ENCODE measurements at regions of chr6 and their contacts with region 1.

Region 1: DNA sequence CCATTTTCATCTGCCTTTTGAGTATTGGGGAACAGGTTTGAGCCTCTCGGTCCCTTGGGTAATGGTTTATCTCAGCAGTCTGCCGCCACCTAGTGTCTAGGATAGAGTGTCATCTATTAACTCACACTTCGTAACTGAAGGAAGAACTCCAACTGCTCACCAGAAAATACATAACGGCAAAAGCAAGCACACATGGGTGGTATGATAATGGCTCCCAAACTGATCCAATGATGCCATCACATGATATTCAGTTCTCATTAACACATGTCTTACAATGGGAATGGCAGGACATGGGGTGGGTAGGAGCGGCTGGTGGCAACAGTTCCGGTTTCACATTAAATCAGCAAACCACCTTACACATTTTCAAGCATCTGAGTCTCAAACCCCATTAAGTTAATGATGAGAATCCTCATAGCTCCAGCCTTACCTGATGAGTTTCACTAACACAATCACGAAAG is 110.7 kb upstream of the PHACTR1 start:
- DNase-seq: peak; percentile 81
- H3K4me3 ChIP-seq: no peak overlapping the region
- H3K27ac ChIP-seq: no peak overlapping the region
- H3K4me1 ChIP-seq: peaks cover 42% of the 10 kb centered on the region
- H3K27me3 ChIP-seq: no peaks in the 10 kb centered on the region
- CTCF ChIP-seq: peak; percentile 58 to 61
- POLR2A ChIP-seq: no peak

Region 2: DNA sequence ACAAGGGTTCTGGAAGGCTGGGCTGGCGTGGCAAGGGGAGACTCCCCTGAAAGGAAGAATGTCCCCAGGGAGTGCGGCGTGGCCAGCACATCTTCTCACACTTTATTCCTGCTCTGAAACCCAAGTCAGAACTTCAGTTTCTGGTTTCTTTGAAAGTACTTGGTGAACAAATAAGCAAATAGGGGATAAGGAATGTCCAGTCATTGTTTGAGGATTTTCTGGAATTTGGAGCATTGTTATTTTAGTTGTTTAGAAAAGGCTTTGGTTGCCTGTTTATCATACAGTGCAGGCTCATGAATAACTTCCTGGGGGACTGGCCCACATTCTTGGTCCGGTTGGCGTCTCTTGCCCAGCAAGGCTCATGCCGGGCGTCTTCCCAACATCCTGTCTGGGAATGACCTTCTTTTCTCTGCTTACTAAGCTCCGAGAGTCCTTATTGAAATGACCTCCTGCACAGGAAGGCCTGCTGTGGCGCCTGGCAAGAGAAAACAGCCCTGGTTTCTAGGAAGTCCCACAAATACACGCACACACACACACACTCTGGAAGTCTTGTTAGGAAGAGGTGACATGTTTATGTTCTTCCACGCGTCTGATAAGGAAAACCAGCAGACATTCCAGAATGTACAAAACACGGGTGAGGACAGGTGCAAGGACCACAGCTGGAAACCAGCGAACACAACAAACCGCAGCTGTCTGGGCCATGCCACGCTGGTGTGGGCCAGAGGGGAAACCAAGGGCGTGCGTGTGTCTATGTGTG is 996.4 kb before region 1 on chr6:
- CTCF ChIA-PET with region 1: no interaction called
- POLR2A ChIA-PET with region 1: no interaction called
- dilution Hi-C with region 1: no loop called
- intact Hi-C with region 1: loop called (anchors 2 kb)
- DNase-seq: peak; percentile 99
- H3K4me3 ChIP-seq: peak overlapping the region in 2 of 3 experiments; percentile 30 to 86
- H3K27ac ChIP-seq: peak overlapping the region; percentile 99
- H3K4me1 ChIP-seq: peaks cover 78% of the 10 kb centered on the region
- H3K27me3 ChIP-seq: no peaks in the 10 kb centered on the region
- CTCF ChIP-seq: no peak
- POLR2A ChIP-seq: no peak

Region 3: GRCh38 chr6:12060780-12061619 is 544.9 kb before region 1 on chr6:
- CTCF ChIA-PET with region 1: no interaction called
- POLR2A ChIA-PET with region 1: no interaction called
- dilution Hi-C with region 1: no loop called
- intact Hi-C with region 1: loop called (anchors 10 kb)
- DNase-seq: no peak
- H3K4me3 ChIP-seq: no peak overlapping the region
- H3K27ac ChIP-seq: no peak overlapping the region
- H3K4me1 ChIP-seq: peaks cover 4% of the 10 kb centered on the region
- H3K27me3 ChIP-seq: no peaks in the 10 kb centered on the region
- CTCF ChIP-seq: no peak
- POLR2A ChIP-seq: no peak

Region 4: DNA sequence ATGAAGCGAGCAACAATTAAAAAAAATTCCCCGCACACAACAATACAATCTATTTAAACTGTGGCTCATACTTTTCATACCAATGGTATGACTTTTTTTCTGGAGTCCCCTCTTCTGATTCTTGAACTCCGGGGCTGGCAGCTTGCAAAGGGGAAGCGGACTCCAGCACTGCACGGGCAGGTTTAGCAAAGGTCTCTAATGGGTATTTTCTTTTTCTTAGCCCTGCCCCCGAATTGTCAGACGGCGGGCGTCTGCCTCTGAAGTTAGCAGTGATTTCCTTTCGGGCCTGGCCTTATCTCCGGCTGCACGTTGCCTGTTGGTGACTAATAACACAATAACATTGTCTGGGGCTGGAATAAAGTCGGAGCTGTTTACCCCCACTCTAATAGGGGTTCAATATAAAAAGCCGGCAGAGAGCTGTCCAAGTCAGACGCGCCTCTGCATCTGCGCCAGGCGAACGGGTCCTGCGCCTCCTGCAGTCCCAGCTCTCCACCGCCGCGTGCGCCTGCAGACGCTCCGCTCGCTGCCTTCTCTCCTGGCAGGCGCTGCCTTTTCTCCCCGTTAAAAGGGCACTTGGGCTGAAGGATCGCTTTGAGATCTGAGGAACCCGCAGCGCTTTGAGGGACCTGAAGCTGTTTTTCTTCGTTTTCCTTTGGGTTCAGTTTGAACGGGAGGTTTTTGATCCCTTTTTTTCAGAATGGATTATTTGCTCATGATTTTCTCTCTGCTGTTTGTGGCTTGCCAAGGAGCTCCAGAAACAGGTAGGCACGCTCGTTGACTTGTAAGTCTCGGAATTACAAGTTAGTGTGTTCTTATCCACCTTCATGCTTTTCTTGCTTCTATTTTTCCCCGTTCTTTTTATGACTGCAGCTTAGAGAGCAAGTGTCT is 315.7 kb before region 1 on chr6 and contains the start of gene EDN1:
- CTCF ChIA-PET with region 1: interaction called, 30 read pairs
- POLR2A ChIA-PET with region 1: interaction called, 18 read pairs
- dilution Hi-C with region 1: no loop called
- intact Hi-C with region 1: no loop called
- DNase-seq: peak; percentile 100
- H3K4me3 ChIP-seq: peak within 1 kb of the TSS; percentile 91 to 98 (median 96)
- H3K27ac ChIP-seq: peak within 1 kb of the TSS; percentile 98
- H3K4me1 ChIP-seq: peaks cover 26% of the 10 kb centered on the region
- H3K27me3 ChIP-seq: no peaks in the 10 kb centered on the region
- CTCF ChIP-seq: no peak
- POLR2A ChIP-seq: peak; percentile 100
- total RNA-seq, gene EDN1: 493 and 514 TPM in 2 replicates

Region 5: DNA sequence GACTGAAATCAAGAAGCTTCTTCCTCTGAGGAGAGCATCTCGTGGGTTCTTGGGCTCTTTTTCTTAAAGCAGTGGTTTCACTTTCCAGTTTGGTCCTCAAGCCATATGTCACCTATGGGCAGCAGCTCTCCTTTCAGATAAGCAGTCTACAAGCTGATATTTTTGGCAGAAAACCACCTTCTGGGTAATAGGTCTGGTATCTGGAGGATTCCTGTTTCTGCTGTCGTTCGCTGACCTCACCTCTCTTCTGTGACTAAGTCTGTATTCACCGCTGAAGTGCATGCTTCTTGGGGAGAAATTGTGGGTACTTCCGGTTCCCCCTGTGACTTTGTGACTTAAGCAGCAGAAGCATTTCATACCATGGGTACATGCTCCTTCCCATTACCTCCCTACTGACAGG is 122.2 kb before region 1 on chr6:
- CTCF ChIA-PET with region 1: interaction called, 58 read pairs
- POLR2A ChIA-PET with region 1: no interaction called
- dilution Hi-C with region 1: no loop called
- intact Hi-C with region 1: loop called (anchors 2 kb)
- DNase-seq: peak; percentile 90
- H3K4me3 ChIP-seq: peak overlapping the region in 1 of 3 experiments; percentile 9
- H3K27ac ChIP-seq: peak overlapping the region; percentile 74
- H3K4me1 ChIP-seq: peaks cover 54% of the 10 kb centered on the region
- H3K27me3 ChIP-seq: no peaks in the 10 kb centered on the region
- CTCF ChIP-seq: no peak
- POLR2A ChIP-seq: peak; percentile 56

Region 6: GRCh38 chr6:12572896-12573827 is 32.8 kb before region 1 on chr6:
- CTCF ChIA-PET with region 1: interaction called, 16 read pairs
- POLR2A ChIA-PET with region 1: interaction called, 3 read pairs
- dilution Hi-C with region 1: no loop called
- intact Hi-C with region 1: loop called (anchors 1 kb)
- DNase-seq: peak; percentile 92
- H3K4me3 ChIP-seq: peak overlapping the region in 1 of 3 experiments; percentile 13
- H3K27ac ChIP-seq: peak overlapping the region; percentile 92
- H3K4me1 ChIP-seq: peaks cover 75% of the 10 kb centered on the region
- H3K27me3 ChIP-seq: no peaks in the 10 kb centered on the region
- CTCF ChIP-seq: no peak
- POLR2A ChIP-seq: no peak

Region 7: GRCh38 chr6:12661432-12662089 is 55.6 kb after region 1 on chr6:
- CTCF ChIA-PET with region 1: no interaction called
- POLR2A ChIA-PET with region 1: no interaction called
- dilution Hi-C with region 1: no loop called
- intact Hi-C with region 1: no loop called
- DNase-seq: no peak
- H3K4me3 ChIP-seq: no peak overlapping the region
- H3K27ac ChIP-seq: no peak overlapping the region
- H3K4me1 ChIP-seq: no peaks in the 10 kb centered on the region
- H3K27me3 ChIP-seq: peaks cover 0 to 2% of the 10 kb centered on the region in 2 experiments
- CTCF ChIP-seq: no peak
- POLR2A ChIP-seq: no peak